ENCODE measurements at regions of chr5 and their contacts with region 1.

Region 1: GRCh38 chr5:31581498-31582099 is 49.5 kb downstream of the C5orf22 start:
- DNase-seq: no peak
- ATAC-seq: no peak
- H3K4me3 ChIP-seq: no peak overlapping the region
- H3K27ac ChIP-seq: no peak overlapping the region
- H3K4me1 ChIP-seq: no peaks in the 10 kb centered on the region
- H3K27me3 ChIP-seq: no peaks in the 10 kb centered on the region
- CTCF ChIP-seq: peak; percentile 18 to 54 (median 34); a peak in 4 of 6 replicates
- EP300 ChIP-seq: no peak
- POLR2A ChIP-seq: no peak
- RAD21 ChIP-seq: peak; percentile 81

Region 2: DNA sequence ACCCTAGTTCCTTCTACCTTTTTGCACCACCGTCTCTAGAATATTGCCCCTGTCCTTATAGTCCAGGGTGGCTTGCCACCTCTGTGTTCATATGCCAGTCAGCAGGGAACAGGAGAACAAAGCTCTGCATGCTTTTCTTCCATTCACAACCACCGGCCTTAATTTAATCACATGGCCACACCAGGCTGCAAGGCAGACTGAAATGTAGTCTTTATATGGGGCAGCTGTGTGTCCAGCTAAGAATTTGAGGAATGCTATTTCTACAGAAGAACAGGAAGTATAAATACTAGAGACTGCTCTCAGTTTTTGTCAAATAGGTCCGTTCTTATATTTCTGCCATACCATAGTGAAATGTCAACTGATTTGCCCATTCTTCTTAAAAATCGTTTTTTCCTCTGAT is 43.7 kb before region 1 on chr5:
- CTCF ChIA-PET with region 1: no interaction called
- POLR2A ChIA-PET with region 1: no interaction called
- RAD21 ChIA-PET with region 1: no interaction called
- SMC1A ChIA-PET with region 1: no interaction called
- in situ Hi-C with region 1: no loop called
- intact Hi-C with region 1: no loop called
- DNase-seq: no peak
- ATAC-seq: no peak
- H3K4me3 ChIP-seq: no peak overlapping the region
- H3K27ac ChIP-seq: no peak overlapping the region
- H3K4me1 ChIP-seq: peaks cover 9% of the 10 kb centered on the region
- H3K27me3 ChIP-seq: no peaks in the 10 kb centered on the region
- CTCF ChIP-seq: no peak
- EP300 ChIP-seq: no peak
- POLR2A ChIP-seq: no peak
- RAD21 ChIP-seq: no peak

Region 3: DNA sequence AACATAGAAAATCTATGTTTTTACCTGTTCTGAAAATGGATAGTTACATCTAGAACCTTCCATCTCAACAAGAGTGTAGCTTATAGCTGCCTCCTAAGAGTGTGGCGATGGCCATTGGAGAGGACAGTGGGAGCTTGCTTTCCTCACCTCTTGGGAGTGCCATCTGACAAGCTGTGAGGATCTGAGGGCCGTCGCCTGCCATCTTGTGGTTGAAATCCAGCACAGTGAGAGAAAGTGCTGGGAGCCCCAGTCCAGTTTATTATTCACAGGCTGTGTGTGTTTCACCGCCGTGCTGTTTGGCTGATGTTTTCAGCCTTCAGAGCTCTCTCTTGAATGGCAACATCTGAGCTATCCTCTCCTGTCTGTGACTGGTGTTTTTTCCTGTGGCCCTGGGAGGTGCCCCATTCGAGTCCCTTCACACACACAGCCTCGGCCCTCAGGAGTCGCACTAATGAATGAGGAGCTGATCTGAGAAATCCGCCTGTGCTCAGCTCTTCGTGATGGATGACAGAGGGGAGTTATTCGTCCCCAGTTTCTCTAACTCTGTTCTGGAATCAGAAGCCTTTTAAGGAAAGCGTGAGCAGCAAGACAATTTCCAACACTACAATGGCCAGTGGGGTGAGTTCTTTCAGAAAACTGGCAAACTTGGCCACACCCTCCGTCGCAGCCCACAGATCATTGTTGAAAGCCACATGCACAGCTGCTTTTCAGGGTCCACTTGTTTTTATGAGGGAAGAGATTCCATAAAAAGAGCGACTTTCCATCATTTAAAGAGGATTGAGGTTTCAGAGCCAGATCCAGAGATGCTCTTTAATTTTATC is 227.7 kb after region 1 on chr5:
- CTCF ChIA-PET with region 1: interaction called, 8 read pairs
- POLR2A ChIA-PET with region 1: no interaction called
- RAD21 ChIA-PET with region 1: no interaction called
- SMC1A ChIA-PET with region 1: no interaction called
- in situ Hi-C with region 1: loop called (anchors 5 kb)
- intact Hi-C with region 1: loop called (anchors 1 kb)
- DNase-seq: no peak
- ATAC-seq: peak; percentile 84
- H3K4me3 ChIP-seq: no peak overlapping the region
- H3K27ac ChIP-seq: no peak overlapping the region
- H3K4me1 ChIP-seq: no peaks in the 10 kb centered on the region
- H3K27me3 ChIP-seq: 0 out of 4 replicates have a peak, but pooled peaks cover 0 to 3% of the 10 kb centered on the region in 2 experiments
- CTCF ChIP-seq: peak; percentile 51 to 75 (median 61); a peak in 5 of 6 replicates
- EP300 ChIP-seq: no peak
- POLR2A ChIP-seq: no peak
- RAD21 ChIP-seq: peak; percentile 83

Region 4: GRCh38 chr5:31921852-31922305 is 340.3 kb after region 1 on chr5:
- CTCF ChIA-PET with region 1: no interaction called
- POLR2A ChIA-PET with region 1: no interaction called
- RAD21 ChIA-PET with region 1: no interaction called
- SMC1A ChIA-PET with region 1: no interaction called
- in situ Hi-C with region 1: no loop called
- intact Hi-C with region 1: loop called (anchors 10 kb)
- DNase-seq: no peak
- ATAC-seq: no peak
- H3K4me3 ChIP-seq: no peak overlapping the region
- H3K27ac ChIP-seq: no peak overlapping the region
- H3K4me1 ChIP-seq: no peaks in the 10 kb centered on the region
- H3K27me3 ChIP-seq: peaks cover 0 to 2% of the 10 kb centered on the region in 2 experiments; a peak in 2 of 4 replicates
- CTCF ChIP-seq: no peak
- EP300 ChIP-seq: no peak
- POLR2A ChIP-seq: no peak
- RAD21 ChIP-seq: no peak

Region 5: GRCh38 chr5:32092938-32093812 is 511.6 kb after region 1 on chr5:
- CTCF ChIA-PET with region 1: interaction called, 14 read pairs
- POLR2A ChIA-PET with region 1: no interaction called
- RAD21 ChIA-PET with region 1: interaction called, 6 read pairs
- SMC1A ChIA-PET with region 1: interaction called, 6 read pairs
- in situ Hi-C with region 1: loop called (anchors 5 kb)
- intact Hi-C with region 1: loop called (anchors 1 kb)
- DNase-seq: peak; percentile 17
- ATAC-seq: peak; percentile 99
- H3K4me3 ChIP-seq: no peak overlapping the region
- H3K27ac ChIP-seq: no peak overlapping the region
- H3K4me1 ChIP-seq: no peaks in the 10 kb centered on the region
- H3K27me3 ChIP-seq: no peaks in the 10 kb centered on the region
- CTCF ChIP-seq: peak; percentile 67 to 83 (median 75)
- EP300 ChIP-seq: no peak
- POLR2A ChIP-seq: no peak
- RAD21 ChIP-seq: peak; percentile 77

Region 6: GRCh38 chr5:32151198-32151597 is 569.6 kb after region 1 on chr5:
- CTCF ChIA-PET with region 1: no interaction called
- POLR2A ChIA-PET with region 1: no interaction called
- RAD21 ChIA-PET with region 1: no interaction called
- SMC1A ChIA-PET with region 1: no interaction called
- in situ Hi-C with region 1: no loop called
- intact Hi-C with region 1: no loop called
- DNase-seq: no peak
- ATAC-seq: no peak
- H3K4me3 ChIP-seq: no peak overlapping the region
- H3K27ac ChIP-seq: no peak overlapping the region
- H3K4me1 ChIP-seq: peaks cover 15% of the 10 kb centered on the region
- H3K27me3 ChIP-seq: no peaks in the 10 kb centered on the region
- CTCF ChIP-seq: no peak
- EP300 ChIP-seq: no peak
- POLR2A ChIP-seq: no peak
- RAD21 ChIP-seq: no peak

Region 7: GRCh38 chr5:33401482-33402390 is 1820.1 kb after region 1 on chr5:
- CTCF ChIA-PET with region 1: no interaction called
- POLR2A ChIA-PET with region 1: no interaction called
- RAD21 ChIA-PET with region 1: no interaction called
- SMC1A ChIA-PET with region 1: no interaction called
- in situ Hi-C with region 1: no loop called
- intact Hi-C with region 1: no loop called
- DNase-seq: no peak
- ATAC-seq: no peak; the same call in 2 of the 3 replicates
- H3K4me3 ChIP-seq: no peak overlapping the region
- H3K27ac ChIP-seq: no peak overlapping the region
- H3K4me1 ChIP-seq: no peaks in the 10 kb centered on the region
- H3K27me3 ChIP-seq: no peaks in the 10 kb centered on the region
- CTCF ChIP-seq: no peak
- EP300 ChIP-seq: no peak
- POLR2A ChIP-seq: no peak
- RAD21 ChIP-seq: no peak